ENCODE measurements at regions of chr12 and their contacts with region 1.

Region 1: DNA sequence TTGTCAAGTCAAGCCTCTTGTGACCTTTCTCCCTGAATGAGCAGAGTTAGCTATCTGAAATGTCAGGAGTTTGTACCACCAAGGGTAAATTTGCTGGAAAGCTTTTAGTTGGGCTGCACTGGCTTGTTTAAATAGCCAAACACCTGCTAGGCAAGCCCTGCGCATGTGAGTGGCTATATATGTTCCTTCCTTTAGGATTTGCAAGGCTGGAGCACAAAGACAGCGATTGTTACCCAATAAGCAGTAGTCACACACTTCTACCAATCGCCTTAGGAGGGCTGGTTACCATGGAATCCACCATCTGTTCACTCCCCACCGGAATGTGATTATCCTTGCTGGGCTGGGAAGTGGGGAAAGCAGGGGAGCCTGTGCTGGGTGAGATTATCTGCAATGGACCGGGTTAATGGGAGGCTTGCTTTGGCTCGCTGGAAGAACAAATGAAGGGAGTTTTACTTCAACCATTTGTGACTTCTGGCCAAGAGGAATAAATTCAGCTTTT is 102.5 kb downstream of the FGD4 start:
- DNase-seq: peak; percentile 59
- H3K4me3 ChIP-seq: peak overlapping the region in 1 of 3 experiments; percentile 33
- H3K27ac ChIP-seq: no peak overlapping the region
- H3K4me1 ChIP-seq: peaks cover 43% of the 10 kb centered on the region
- H3K27me3 ChIP-seq: no peaks in the 10 kb centered on the region
- CTCF ChIP-seq: no peak
- POLR2A ChIP-seq: no peak

Region 2: GRCh38 chr12:32467959-32468863 is 33.7 kb before region 1 on chr12:
- CTCF ChIA-PET with region 1: no interaction called
- POLR2A ChIA-PET with region 1: no interaction called
- dilution Hi-C with region 1: no loop called
- intact Hi-C with region 1: loop called (anchors 1 kb)
- DNase-seq: peak; percentile 73
- H3K4me3 ChIP-seq: no peak overlapping the region
- H3K27ac ChIP-seq: no peak overlapping the region
- H3K4me1 ChIP-seq: peaks cover 10% of the 10 kb centered on the region
- H3K27me3 ChIP-seq: no peaks in the 10 kb centered on the region
- CTCF ChIP-seq: no peak
- POLR2A ChIP-seq: no peak

Region 3: DNA sequence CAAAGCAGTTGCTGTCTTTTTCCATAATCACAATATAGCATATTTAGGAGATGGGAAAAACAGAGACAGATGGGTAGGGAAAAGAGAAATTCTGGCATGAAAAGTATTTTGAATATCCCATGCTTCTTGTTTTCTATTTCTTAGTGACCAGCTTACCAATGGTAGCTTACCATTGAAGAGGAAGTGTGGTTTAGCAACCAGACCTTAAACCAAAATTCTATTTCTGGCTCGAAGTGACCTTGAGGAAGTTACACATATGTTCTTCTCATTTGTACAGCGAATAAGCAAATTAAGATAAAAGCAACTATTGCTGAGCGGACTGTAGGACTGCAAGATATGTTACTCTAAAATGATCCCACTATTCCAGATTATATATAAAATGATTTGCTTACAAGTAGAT is 19.7 kb before region 1 on chr12:
- CTCF ChIA-PET with region 1: interaction called, 4 read pairs
- POLR2A ChIA-PET with region 1: no interaction called
- dilution Hi-C with region 1: no loop called
- intact Hi-C with region 1: loop called (anchors 1 kb)
- DNase-seq: peak; percentile 71
- H3K4me3 ChIP-seq: no peak overlapping the region
- H3K27ac ChIP-seq: peak overlapping the region; percentile 47
- H3K4me1 ChIP-seq: peaks cover 53% of the 10 kb centered on the region
- H3K27me3 ChIP-seq: no peaks in the 10 kb centered on the region
- CTCF ChIP-seq: no peak
- POLR2A ChIP-seq: no peak

Region 4: DNA sequence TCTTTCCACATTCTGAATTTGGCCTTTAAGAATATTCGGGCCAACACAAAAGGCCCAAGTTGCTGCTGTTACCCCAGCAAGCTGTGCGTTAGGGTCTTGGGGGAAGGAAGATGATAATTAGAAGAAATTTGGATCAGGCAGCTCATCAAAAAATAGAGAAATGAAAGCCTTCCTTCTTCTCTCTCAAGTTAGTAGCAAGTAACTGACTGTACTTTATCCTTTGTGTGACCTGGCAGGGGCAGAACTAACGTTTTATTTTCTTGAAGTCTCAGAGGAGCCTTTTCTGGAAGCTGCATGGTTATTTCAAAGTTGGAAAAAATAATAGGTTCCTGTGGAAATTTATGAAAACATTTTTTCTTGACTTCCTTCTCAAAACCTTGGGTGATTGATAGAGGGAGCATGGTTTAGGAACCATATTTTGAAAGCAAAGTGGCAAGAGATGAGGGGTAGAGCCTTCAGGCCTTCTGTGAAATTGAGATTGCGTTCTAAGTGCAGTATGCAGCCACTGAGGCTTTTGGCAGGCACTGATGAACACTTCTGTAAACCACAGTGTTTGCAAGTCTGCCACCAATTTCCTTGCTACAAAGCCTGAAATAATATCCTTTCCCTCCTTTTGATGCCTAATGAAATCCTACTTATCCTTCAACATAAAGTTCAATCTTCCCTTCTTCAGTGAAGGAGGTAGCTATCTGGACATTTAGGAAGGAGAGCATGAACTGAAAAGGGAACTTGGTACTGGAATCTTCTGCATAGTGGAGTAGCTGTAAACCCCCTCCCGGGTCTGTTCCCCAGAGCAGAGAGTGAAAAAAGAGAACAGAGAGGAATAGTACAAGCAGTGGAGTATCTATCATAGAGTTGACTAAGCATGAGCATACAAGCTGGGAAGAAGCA is 20.7 kb after region 1 on chr12:
- CTCF ChIA-PET with region 1: interaction called, 3 read pairs
- POLR2A ChIA-PET with region 1: no interaction called
- dilution Hi-C with region 1: no loop called
- intact Hi-C with region 1: loop called (anchors 2 kb)
- DNase-seq: no peak
- H3K4me3 ChIP-seq: no peak overlapping the region
- H3K27ac ChIP-seq: peak overlapping the region; percentile 18
- H3K4me1 ChIP-seq: peaks cover 12% of the 10 kb centered on the region
- H3K27me3 ChIP-seq: no peaks in the 10 kb centered on the region
- CTCF ChIP-seq: no peak
- POLR2A ChIP-seq: no peak